Tibial artery (tissue), 4 donors: ENCODE measurements at regions of chr2 and their contacts with region 1.

Region 1: GRCh38 chr2:137838255-137839092 is 125.8 kb upstream of the HNMT start:
- DNase-seq: no peak
- H3K4me3 ChIP-seq: no peak overlapping the region
- H3K27ac ChIP-seq: no peak overlapping the region
- H3K4me1 ChIP-seq: no peaks in the 10 kb centered on the region
- H3K27me3 ChIP-seq: no peaks in the 10 kb centered on the region
- CTCF ChIP-seq: peak; percentile 60 to 67

Region 2: GRCh38 chr2:136423516-136423996 is 1414.9 kb before region 1 on chr2:
- intact Hi-C with region 1: loop called (anchors 5 kb)
- DNase-seq: peak; percentile 37 to 73
- H3K4me3 ChIP-seq: peak overlapping the region; percentile 32 to 48
- H3K27ac ChIP-seq: no peak overlapping the region
- H3K4me1 ChIP-seq: peaks cover 0 to 6% (median 0%) of the 10 kb centered on the region in 4 donors
- H3K27me3 ChIP-seq: peaks cover 0 to 11% of the 10 kb centered on the region in 2 donors
- CTCF ChIP-seq: peak; percentile 78 to 88

Region 3: DNA sequence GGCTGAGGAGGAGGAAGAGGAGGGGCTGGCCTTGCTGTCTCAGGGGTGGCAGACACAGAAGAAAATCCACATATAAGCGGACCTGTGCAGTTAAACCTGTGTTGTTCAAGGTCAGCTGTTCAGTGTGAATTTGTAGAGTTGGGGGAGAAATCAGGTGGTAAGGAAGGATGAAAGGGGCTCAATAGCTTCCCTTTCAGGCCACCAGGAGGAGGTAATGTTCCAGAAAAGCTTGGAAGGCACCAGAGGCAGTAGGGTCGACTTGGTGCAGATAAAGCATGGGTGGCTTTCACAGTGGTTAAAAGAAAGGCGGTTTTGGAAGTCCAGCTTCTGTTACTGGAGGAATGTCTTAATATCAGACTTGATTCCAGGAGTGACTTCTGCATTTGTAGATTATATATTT is 905.8 kb before region 1 on chr2:
- intact Hi-C with region 1: loop called (anchors 10 kb)
- DNase-seq: no peak
- H3K4me3 ChIP-seq: no peak overlapping the region
- H3K27ac ChIP-seq: no peak overlapping the region
- H3K4me1 ChIP-seq: no peaks in the 10 kb centered on the region
- H3K27me3 ChIP-seq: no peaks in the 10 kb centered on the region
- CTCF ChIP-seq: peak in 1 of 2 experiments; percentile 11

Region 4: GRCh38 chr2:137797641-137798040 is 40.8 kb before region 1 on chr2:
- intact Hi-C with region 1: no loop called
- DNase-seq: no peak
- H3K4me3 ChIP-seq: no peak overlapping the region
- H3K27ac ChIP-seq: no peak overlapping the region
- H3K4me1 ChIP-seq: no peaks in the 10 kb centered on the region
- H3K27me3 ChIP-seq: no peaks in the 10 kb centered on the region
- CTCF ChIP-seq: no peak